ENCODE measurements at regions of chr12 and their contacts with region 1.

Region 1: DNA sequence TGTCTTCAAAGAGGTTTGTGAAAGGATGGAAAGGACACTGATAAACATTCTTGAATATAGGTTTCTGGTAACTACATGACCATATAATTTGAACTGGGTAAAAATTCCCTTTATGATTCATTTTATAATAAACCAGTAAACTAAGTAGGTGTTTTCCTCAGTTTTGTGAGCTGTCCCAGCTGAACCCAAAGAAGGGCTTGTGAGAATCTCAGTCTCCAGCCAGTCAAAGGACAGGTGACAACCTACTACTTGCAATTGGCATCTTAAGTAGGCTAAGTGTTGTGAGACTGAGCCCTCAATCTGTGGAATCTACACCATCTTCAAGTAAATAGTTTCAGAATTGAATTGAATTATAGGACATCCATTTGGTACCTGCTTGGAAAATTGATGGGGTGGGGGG is 75.2 kb downstream of the MYF5 start:
- DNase-seq: no peak
- ATAC-seq: no peak
- H3K4me3 ChIP-seq: no peak overlapping the region
- H3K4me3 Mint-ChIP-seq: no peak overlapping the region
- H3K27ac ChIP-seq: no peak overlapping the region
- H3K27ac Mint-ChIP-seq: no peak overlapping the region
- H3K4me1 ChIP-seq: no peaks in the 10 kb centered on the region
- H3K4me1 Mint-ChIP-seq: no peaks in the 10 kb centered on the region
- H3K27me3 ChIP-seq: no peaks in the 10 kb centered on the region
- H3K27me3 Mint-ChIP-seq: no peaks in the 10 kb centered on the region

Region 2: GRCh38 chr12:80714055-80714454 is 77.8 kb before region 1 on chr12:
- CTCF ChIA-PET with region 1: no interaction called
- POLR2A ChIA-PET with region 1: no interaction called
- intact Hi-C with region 1: no loop called
- DNase-seq: no peak
- ATAC-seq: no peak
- H3K4me3 ChIP-seq: no peak overlapping the region
- H3K4me3 Mint-ChIP-seq: no peak overlapping the region
- H3K27ac ChIP-seq: no peak overlapping the region
- H3K27ac Mint-ChIP-seq: no peak overlapping the region
- H3K4me1 ChIP-seq: no peaks in the 10 kb centered on the region
- H3K4me1 Mint-ChIP-seq: no peaks in the 10 kb centered on the region
- H3K27me3 ChIP-seq: peaks cover 0 to 3% of the 10 kb centered on the region in 2 donors
- H3K27me3 Mint-ChIP-seq: peaks cover 52 to 68% (median 59%) of the 10 kb centered on the region in 5 donors

Region 3: GRCh38 chr12:80802652-80803400 is 11.0 kb after region 1 on chr12:
- CTCF ChIA-PET with region 1: no interaction called
- POLR2A ChIA-PET with region 1: no interaction called
- intact Hi-C with region 1: loop called in 1 of 2 experiments (anchors 1 kb)
- DNase-seq: no peak
- ATAC-seq: no peak
- H3K4me3 ChIP-seq: no peak overlapping the region
- H3K4me3 Mint-ChIP-seq: no peak overlapping the region
- H3K27ac ChIP-seq: no peak overlapping the region
- H3K27ac Mint-ChIP-seq: no peak overlapping the region
- H3K4me1 ChIP-seq: no peaks in the 10 kb centered on the region
- H3K4me1 Mint-ChIP-seq: no peaks in the 10 kb centered on the region
- H3K27me3 ChIP-seq: no peaks in the 10 kb centered on the region
- H3K27me3 Mint-ChIP-seq: no peaks in the 10 kb centered on the region

Measured in naive thymus-derived CD4-positive, alpha-beta T cell (primary cell).